ENCODE measurements at regions of chr10 and their contacts with region 1.

Region 1: GRCh38 chr10:93702211-93703001 is at the start of gene FRA10AC1:
- DNase-seq: peak; percentile 90
- H3K4me3 Mint-ChIP-seq: no peak within 1 kb of the TSS
- H3K27ac Mint-ChIP-seq: no peak within 1 kb of the TSS
- H3K4me1 Mint-ChIP-seq: peaks cover 8% of the 10 kb centered on the region
- H3K27me3 Mint-ChIP-seq: no peaks in the 10 kb centered on the region
- CTCF ChIP-seq: peak; percentile 71
- total RNA-seq, gene FRA10AC1: 19.3 and 25.1 TPM in 2 replicates

Region 2: GRCh38 chr10:92799591-92800446 is 902.6 kb before region 1 on chr10:
- CTCF ChIA-PET with region 1: no interaction called
- POLR2A ChIA-PET with region 1: no interaction called
- intact Hi-C with region 1: no loop called
- DNase-seq: peak; percentile 52
- H3K4me3 Mint-ChIP-seq: no peak overlapping the region
- H3K27ac Mint-ChIP-seq: no peak overlapping the region
- H3K4me1 Mint-ChIP-seq: peaks cover 8% of the 10 kb centered on the region
- H3K27me3 Mint-ChIP-seq: no peaks in the 10 kb centered on the region
- CTCF ChIP-seq: no peak

Region 3: DNA sequence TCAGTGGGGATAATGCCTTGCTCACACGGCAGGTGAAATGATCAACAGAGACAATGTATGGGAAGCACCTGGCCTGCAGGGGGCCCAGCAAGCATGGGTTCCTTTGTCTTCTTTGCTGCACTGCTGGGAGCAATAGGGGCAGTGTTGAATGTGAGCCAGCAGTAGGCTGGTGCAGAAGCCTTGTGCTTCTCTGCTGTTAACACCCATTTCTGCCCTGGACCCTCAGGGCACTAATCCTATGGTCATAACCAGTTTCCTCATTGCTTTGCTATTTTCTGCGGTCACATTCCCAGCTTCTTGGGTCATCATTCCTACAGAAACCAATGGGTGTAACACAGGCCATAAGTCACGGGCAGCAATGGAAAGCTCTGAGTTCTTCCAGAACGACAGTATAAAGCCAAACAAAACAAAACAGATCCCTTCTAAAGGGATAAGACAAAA is 44.5 kb after region 1 on chr10:
- CTCF ChIA-PET with region 1: interaction called, 9 read pairs
- POLR2A ChIA-PET with region 1: interaction called, 27 read pairs
- intact Hi-C with region 1: loop called (anchors 5 kb)
- DNase-seq: peak; percentile 96
- H3K4me3 Mint-ChIP-seq: peak overlapping the region; percentile 13
- H3K27ac Mint-ChIP-seq: peak overlapping the region; percentile 13
- H3K4me1 Mint-ChIP-seq: peaks cover 17% of the 10 kb centered on the region
- H3K27me3 Mint-ChIP-seq: no peaks in the 10 kb centered on the region
- CTCF ChIP-seq: peak; percentile 32

Region 4: GRCh38 chr10:93859049-93859655 is 156.7 kb after region 1 on chr10:
- CTCF ChIA-PET with region 1: interaction called, 22 read pairs
- POLR2A ChIA-PET with region 1: interaction called, 7 read pairs
- intact Hi-C with region 1: loop called (anchors 1 kb)
- DNase-seq: peak; percentile 26
- H3K4me3 Mint-ChIP-seq: no peak overlapping the region
- H3K27ac Mint-ChIP-seq: no peak overlapping the region
- H3K4me1 Mint-ChIP-seq: no peaks in the 10 kb centered on the region
- H3K27me3 Mint-ChIP-seq: no peaks in the 10 kb centered on the region
- CTCF ChIP-seq: peak; percentile 56